Heart left ventricle (tissue), 16 donors: ENCODE measurements at regions of chr11 and their contacts with region 1.

Region 1: DNA sequence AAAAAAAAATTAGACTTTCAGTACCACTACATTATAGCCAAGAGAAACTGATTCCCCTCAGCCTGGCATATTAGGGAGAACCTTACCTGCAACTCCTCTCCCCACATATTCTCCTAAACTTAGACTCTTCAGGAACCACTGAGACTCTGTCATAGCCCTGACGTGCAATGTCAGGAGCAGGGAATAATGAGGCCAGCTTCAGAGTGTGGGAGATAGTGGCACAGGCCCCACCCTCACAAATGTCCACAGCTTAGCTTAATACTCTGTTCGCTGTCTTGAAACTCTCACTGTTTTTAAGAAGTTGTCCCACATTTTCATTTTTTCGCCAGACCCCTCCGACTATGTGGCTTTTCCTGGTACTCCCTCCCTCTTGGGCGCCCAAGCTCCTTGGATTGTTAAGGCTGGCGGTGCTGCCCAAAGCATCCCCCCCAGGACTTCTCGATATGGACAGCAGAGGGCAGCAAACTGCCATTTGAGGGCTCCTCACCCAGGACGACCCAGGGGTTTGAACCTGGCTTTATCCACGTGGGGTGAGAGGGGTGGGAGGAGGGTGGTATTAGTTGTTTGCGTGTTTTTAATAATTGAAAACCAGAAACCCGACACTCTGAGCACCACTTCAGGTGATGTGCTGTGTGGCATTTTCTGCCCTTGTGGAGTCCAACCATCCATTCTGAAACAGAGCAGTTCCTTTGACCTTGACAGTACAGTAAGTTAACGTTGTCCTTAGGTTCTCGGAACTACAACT is 45.2 kb upstream of the RASSF10 start:
- DNase-seq: peak; percentile 50 to 69 (median 57)
- ATAC-seq: peak; percentile 60 to 93 (median 91)
- H3K4me3 ChIP-seq: no peak overlapping the region
- H3K27ac ChIP-seq: no peak overlapping the region
- H3K4me1 ChIP-seq: peaks cover 0 to 5% (median 0%) of the 10 kb centered on the region in 12 donors
- H3K27me3 ChIP-seq: no peaks in the 10 kb centered on the region
- CTCF ChIP-seq: peak; percentile 72 to 94 (median 86)
- POLR2A ChIP-seq: no peak

Region 2: DNA sequence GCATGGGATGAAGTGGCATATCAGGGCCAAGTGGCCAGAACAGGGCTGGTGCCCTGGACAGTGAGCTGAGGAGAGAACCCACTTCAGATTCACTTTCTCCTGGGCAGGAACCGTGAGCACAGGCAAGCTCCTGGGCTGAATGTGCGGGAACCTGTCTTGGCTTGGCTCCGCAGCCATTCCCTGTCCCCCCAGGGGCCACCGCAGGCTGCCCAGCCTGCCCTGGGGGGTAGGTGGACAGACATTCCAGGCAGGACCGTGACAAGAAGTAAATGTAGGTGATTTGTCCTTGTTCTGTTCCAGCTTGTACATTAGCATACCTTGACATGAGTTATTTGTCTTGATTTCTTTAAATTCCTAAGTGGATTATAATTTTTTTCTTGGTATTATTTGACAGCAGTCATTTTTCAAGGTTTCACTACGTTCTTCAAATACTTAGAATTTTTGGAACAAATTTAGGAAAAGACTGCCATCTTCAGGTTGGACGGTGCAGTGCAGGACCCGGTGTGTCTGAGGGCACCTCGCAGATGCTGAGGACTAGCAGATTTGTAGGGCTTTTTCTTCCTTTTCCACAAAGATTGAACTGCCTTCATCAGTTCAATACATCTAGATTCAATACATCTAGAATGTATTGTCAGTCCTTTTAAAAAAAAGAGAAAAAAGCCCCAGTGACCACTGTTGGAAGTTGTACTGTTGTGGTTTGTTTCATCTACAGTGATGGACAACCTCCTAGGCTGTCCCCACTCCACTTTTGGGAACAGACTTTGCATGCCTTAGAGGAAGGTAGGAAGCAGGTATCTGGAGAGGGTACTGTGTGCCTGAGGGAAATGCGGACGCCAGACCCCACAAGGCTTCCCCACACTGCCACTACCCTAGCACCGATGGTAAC is 69.9 kb before region 1 on chr11:
- intact Hi-C with region 1: no loop called
- DNase-seq: peak in 3 of 5 donors; percentile 40 to 51 (median 49)
- ATAC-seq: no peak
- H3K4me3 ChIP-seq: no peak overlapping the region
- H3K27ac ChIP-seq: peak overlapping the region in 6 of 12 donors; percentile 16 to 84 (median 38)
- H3K4me1 ChIP-seq: peaks cover 0 to 53% (median 21%) of the 10 kb centered on the region in 12 donors
- H3K27me3 ChIP-seq: no peaks in the 10 kb centered on the region
- CTCF ChIP-seq: peak; percentile 79 to 94 (median 89)
- POLR2A ChIP-seq: no peak

Region 3: GRCh38 chr11:13152736-13153533 is 189.0 kb after region 1 on chr11:
- intact Hi-C with region 1: loop called (anchors 1 to 10 kb)
- DNase-seq: no peak
- ATAC-seq: no peak
- H3K4me3 ChIP-seq: no peak overlapping the region
- H3K27ac ChIP-seq: no peak overlapping the region
- H3K4me1 ChIP-seq: no peaks in the 10 kb centered on the region
- H3K27me3 ChIP-seq: no peaks in the 10 kb centered on the region
- CTCF ChIP-seq: peak; percentile 16 to 62 (median 45)
- POLR2A ChIP-seq: no peak

Region 4: GRCh38 chr11:13183094-13183825 is 219.3 kb after region 1 on chr11:
- intact Hi-C with region 1: loop called in 9 of 10 experiments (anchors 1 to 10 kb)
- DNase-seq: no peak
- ATAC-seq: peak in 2 of 4 donors; percentile 36 to 63
- H3K4me3 ChIP-seq: peak overlapping the region in 8 of 12 donors; percentile 5 to 40 (median 20)
- H3K27ac ChIP-seq: no peak overlapping the region
- H3K4me1 ChIP-seq: peaks cover 0 to 8% (median 4%) of the 10 kb centered on the region in 12 donors
- H3K27me3 ChIP-seq: no peaks in the 10 kb centered on the region
- CTCF ChIP-seq: peak in 11 of 12 donors; percentile 20 to 62 (median 44)
- POLR2A ChIP-seq: no peak

Region 5: GRCh38 chr11:13189561-13190426 is 225.8 kb after region 1 on chr11:
- intact Hi-C with region 1: loop called in 4 of 10 experiments (anchors 5 to 10 kb)
- DNase-seq: no peak
- ATAC-seq: no peak
- H3K4me3 ChIP-seq: no peak overlapping the region
- H3K27ac ChIP-seq: no peak overlapping the region
- H3K4me1 ChIP-seq: no peaks in the 10 kb centered on the region
- H3K27me3 ChIP-seq: no peaks in the 10 kb centered on the region
- CTCF ChIP-seq: no peak
- POLR2A ChIP-seq: no peak